MCF 10A (cell line): ENCODE measurements at regions of chr18 and their contacts with region 1.

Region 1: DNA sequence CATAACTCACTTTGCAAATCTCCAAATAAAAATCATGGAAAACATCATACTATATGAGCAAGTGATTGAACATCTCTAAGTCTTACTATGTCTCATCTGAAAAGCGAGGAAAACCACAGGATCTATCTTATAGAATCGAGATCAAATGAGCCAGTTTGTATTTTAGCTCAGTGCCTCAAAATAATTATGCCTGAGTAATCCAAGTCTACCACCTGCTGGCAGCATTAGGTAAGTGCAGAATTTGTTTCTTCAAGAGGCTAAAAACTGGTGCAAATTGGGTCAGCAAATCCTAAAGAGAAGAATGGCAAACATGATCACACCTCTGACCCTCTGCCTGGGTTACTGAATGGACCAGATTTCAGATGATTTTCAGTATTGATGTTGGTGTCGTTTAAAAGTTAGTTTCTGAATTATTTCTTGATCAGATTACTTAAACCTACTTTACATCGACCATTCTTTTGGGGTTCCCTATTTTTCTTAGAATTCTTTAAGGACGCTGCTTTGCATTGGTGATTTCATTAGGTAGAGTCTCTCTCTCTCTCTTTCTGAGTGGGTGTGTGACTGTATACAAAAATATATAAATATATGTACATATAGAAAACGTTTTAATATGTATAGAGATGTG is 12.7 kb upstream of the FHOD3 start:
- DNase-seq: peak; percentile 75
- H3K4me3 Mint-ChIP-seq: no peak overlapping the region
- H3K27ac Mint-ChIP-seq: no peak overlapping the region
- H3K4me1 Mint-ChIP-seq: no peaks in the 10 kb centered on the region
- H3K27me3 Mint-ChIP-seq: no peaks in the 10 kb centered on the region
- CTCF ChIP-seq: peak; percentile 67

Region 2: DNA sequence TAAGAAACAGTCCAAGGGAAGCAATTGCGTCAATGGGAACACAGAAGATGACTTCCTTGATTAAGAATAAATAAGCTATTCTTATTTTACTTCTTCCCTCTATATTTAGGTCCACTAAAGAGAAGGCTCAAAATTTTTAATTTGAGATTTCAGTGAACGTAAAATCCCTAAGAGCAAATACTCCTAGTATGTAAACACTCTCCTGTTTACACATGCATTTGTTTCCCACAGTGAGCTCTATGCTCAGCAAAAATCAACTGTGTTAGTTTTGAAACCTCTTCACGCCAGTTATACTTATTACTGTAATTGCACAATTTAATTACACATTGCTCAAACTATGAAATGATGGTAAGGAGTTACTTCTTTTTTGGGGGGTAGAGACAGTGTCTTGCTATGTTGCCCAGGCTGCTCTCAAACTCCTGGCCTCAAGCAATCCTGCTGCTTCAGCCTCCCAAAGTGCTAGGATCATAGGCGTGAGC is 164.4 kb before region 1 on chr18:
- CTCF ChIA-PET with region 1: no interaction called
- POLR2A ChIA-PET with region 1: no interaction called
- intact Hi-C with region 1: no loop called
- DNase-seq: no peak
- H3K4me3 Mint-ChIP-seq: no peak overlapping the region
- H3K27ac Mint-ChIP-seq: no peak overlapping the region
- H3K4me1 Mint-ChIP-seq: peaks cover 9% of the 10 kb centered on the region
- H3K27me3 Mint-ChIP-seq: no peaks in the 10 kb centered on the region
- CTCF ChIP-seq: no peak

Region 3: DNA sequence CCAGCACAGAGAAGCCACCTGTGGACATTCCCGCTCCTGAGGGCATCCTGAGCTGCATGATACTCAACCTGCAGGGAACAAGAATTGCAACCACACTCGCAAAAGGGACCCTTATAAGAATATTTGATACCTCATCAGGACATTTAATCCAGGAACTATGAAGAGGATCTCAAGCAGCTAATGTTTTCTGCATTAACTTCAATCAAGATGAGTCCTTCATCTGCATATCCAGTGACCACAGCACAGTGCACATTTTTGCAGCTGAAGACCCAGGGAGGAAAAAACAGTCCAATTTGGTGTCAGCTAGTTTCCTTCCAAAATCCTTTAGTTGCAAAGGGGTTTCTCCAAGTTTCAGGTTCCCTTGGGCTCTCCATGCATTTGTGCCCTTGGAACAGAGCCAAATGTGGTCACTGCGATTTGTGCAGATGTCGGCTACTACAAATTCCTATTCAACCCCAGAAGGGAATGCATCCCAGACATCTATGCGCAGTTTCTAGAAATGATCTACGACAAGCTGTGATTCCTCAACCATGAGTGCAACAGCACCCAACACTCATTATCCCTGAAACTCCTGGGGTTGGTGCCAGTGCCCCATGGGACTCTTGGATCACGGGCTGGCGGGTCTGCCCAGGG is 10.6 kb before region 1 on chr18:
- CTCF ChIA-PET with region 1: interaction called, 15 read pairs
- POLR2A ChIA-PET with region 1: interaction called, 3 read pairs
- intact Hi-C with region 1: no loop called
- DNase-seq: no peak
- H3K4me3 Mint-ChIP-seq: no peak overlapping the region
- H3K27ac Mint-ChIP-seq: no peak overlapping the region
- H3K4me1 Mint-ChIP-seq: peaks cover 9% of the 10 kb centered on the region
- H3K27me3 Mint-ChIP-seq: no peaks in the 10 kb centered on the region
- CTCF ChIP-seq: no peak

Region 4: DNA sequence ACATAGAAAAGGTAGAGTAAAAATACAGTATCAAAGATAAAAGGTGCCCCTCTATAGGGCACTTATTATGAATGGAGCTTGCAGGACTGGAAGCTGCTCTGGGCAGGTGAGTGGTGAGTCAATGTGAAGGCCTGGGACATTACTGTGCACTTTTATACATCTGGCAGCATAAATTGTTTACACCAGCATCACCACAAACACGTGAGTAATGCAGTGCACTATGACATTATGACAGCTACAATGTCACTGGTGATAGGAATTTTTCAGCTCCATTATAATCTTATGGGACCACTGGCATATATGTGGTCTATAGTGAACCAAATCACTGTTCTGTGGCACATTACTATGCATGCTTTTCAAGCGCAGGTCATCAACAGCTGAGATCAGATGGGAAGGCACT is 496.0 kb after region 1 on chr18:
- CTCF ChIA-PET with region 1: no interaction called
- POLR2A ChIA-PET with region 1: no interaction called
- intact Hi-C with region 1: no loop called
- DNase-seq: no peak
- H3K4me3 Mint-ChIP-seq: no peak overlapping the region
- H3K27ac Mint-ChIP-seq: no peak overlapping the region
- H3K4me1 Mint-ChIP-seq: peaks cover 4% of the 10 kb centered on the region
- H3K27me3 Mint-ChIP-seq: no peaks in the 10 kb centered on the region
- CTCF ChIP-seq: no peak